Activated naive CD4-positive, alpha-beta T cell treated with anti-CD3 and anti-CD28 coated beads for 36 hours (primary cell): ENCODE measurements at regions of chr11 and their contacts with region 1.

Region 1: GRCh38 chr11:23555085-23555484 is 694.8 kb upstream of the CCDC179 start:
- DNase-seq: no peak
- H3K4me3 Mint-ChIP-seq: no peak overlapping the region
- H3K27ac Mint-ChIP-seq: no peak overlapping the region
- H3K4me1 Mint-ChIP-seq: no peaks in the 10 kb centered on the region
- H3K27me3 Mint-ChIP-seq: no peaks in the 10 kb centered on the region

Region 2: GRCh38 chr11:23112987-23113886 is 441.8 kb before region 1 on chr11:
- CTCF ChIA-PET with region 1: no interaction called
- intact Hi-C with region 1: loop called (anchors 10 kb)
- DNase-seq: peak; percentile 42
- H3K4me3 Mint-ChIP-seq: no peak overlapping the region
- H3K27ac Mint-ChIP-seq: no peak overlapping the region
- H3K4me1 Mint-ChIP-seq: no peaks in the 10 kb centered on the region
- H3K27me3 Mint-ChIP-seq: no peaks in the 10 kb centered on the region